ENCODE measurements at regions of chr2 and their contacts with region 1.

Region 1: GRCh38 chr2:85813982-85814801 is 60.4 kb downstream of the ATOH8 start:
- DNase-seq: peak; percentile 93 to 94
- H3K4me3 ChIP-seq: no peak overlapping the region
- H3K27ac ChIP-seq: peak overlapping the region in 1 of 2 donors; percentile 40
- H3K4me1 ChIP-seq: peaks cover 5 to 42% (median 26%) of the 10 kb centered on the region in 4 donors
- H3K27me3 ChIP-seq: no peaks in the 10 kb centered on the region
- CTCF ChIP-seq: peak; percentile 97 to 99

Region 2: GRCh38 chr2:85648619-85649018 is 165.6 kb before region 1 on chr2:
- intact Hi-C with region 1: loop called (anchors 10 kb)
- DNase-seq: no peak
- H3K4me3 ChIP-seq: no peak overlapping the region
- H3K27ac ChIP-seq: peak overlapping the region; percentile 28 to 46
- H3K4me1 ChIP-seq: peaks cover 0 to 24% (median 3%) of the 10 kb centered on the region in 4 donors
- H3K27me3 ChIP-seq: no peaks in the 10 kb centered on the region
- CTCF ChIP-seq: peak; percentile 14 to 21

Region 3: GRCh38 chr2:85728883-85729824 is 85.0 kb before region 1 on chr2:
- intact Hi-C with region 1: loop called (anchors 1 kb)
- DNase-seq: peak; percentile 91 to 95
- H3K4me3 ChIP-seq: no peak overlapping the region
- H3K27ac ChIP-seq: peak overlapping the region; percentile 31 to 51
- H3K4me1 ChIP-seq: peaks cover 0 to 16% (median 9%) of the 10 kb centered on the region in 4 donors
- H3K27me3 ChIP-seq: no peaks in the 10 kb centered on the region
- CTCF ChIP-seq: peak; percentile 97 to 98

Region 4: DNA sequence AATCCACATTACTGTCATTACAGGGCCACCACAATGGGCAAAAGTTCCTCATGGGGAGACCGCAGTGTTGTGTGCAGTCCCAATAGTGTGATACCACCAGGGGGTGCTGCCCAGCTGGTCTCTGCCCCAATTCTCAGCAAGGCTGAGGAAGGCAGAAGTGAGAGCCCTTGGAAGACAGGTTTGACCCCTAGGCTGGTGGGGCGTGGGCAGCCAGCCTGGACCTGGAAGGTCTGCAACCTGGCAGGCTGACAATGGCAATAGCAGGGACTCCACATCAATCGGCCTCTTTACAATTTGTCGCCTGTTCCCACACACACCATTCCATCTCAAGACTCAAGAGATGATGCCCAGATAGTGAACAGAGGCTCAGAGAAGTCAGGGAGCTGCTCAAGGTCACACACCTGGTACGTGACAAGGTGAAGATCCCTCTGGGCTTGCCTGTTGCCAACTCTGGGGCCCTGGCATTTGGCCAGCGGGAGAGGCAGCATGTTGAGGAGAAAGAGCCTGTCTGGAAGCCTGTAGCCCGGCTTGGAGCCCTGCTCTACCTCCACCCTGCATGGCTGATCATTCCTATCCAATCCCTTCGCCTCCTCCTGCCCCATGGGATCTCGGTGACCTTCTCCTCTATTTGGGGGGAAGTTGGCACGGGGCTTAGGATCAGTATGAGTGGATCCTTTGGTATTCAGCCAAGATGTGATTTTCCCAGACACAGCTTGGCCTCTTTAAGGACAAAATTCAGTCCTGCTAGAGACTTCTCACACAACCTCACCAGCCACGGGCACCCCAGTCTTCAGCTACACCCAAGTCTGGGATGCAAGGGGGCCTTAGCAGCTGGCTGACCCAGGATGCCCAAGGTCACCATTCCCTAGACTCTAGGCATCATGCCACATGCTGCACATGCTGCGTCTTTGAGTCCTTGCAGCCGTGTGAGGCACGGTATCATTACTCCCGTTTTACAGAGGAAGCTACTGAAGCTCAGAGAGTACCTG is 63.3 kb before region 1 on chr2:
- intact Hi-C with region 1: no loop called
- DNase-seq: peak; percentile 79 to 90
- H3K4me3 ChIP-seq: peak overlapping the region in 1 of 2 donors; percentile 12
- H3K27ac ChIP-seq: peak overlapping the region; percentile 96 to 97
- H3K4me1 ChIP-seq: peaks cover 0 to 77% (median 63%) of the 10 kb centered on the region in 4 donors
- H3K27me3 ChIP-seq: no peaks in the 10 kb centered on the region
- CTCF ChIP-seq: peak; percentile 76 to 82

Measured in tibial artery (tissue), 4 donors.